ENCODE measurements at regions of chr17 and their contacts with region 1.

Region 1: DNA sequence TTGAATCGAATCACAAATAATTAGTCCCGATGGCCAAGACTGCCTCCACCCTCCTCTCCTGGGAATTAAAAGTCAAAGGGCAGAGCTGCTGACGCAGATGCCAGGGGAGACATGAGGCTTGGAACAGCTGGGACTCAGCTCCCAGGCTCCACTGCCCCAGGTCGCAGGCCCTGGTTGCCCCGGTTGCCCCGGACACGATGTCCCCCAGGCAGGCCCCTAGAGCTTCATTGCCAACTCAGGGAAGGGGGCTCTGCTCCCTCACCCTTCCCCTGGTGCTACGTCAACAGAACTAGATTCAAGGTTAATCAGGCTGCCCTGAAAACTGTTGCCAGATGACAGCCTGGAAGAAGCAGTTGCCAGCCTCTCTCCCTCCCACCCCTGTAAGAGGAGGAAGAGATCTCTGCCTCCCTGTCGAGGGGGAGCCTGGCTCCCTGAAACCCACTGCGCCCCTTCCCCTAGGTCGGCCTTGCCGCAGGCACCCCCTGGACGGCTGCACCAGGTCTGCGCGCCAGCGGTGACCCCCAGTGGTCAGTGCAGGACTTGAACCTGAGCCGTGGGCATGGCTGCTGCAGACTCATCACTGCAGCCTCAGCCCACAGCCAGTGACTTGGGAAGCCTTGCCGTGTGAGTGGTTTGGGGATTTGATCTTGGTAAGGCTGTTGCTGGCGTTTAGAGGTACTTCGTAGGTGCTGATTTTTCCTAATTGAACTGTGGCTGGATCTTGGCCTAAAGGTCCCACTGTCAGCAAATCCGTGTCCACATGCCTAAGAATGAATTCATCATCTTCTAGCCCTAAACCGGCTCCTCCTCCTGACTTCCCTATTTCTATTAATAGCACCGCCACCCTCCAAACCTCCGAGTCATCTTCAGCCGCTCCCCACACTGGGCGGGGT is 84.1 kb upstream of the TOB1 start:
- DNase-seq: peak; percentile 84
- ATAC-seq: peak; percentile 91
- H3K4me3 ChIP-seq: no peak overlapping the region
- H3K27ac ChIP-seq: peak overlapping the region; percentile 35
- H3K4me1 ChIP-seq: peaks cover 39% of the 10 kb centered on the region
- H3K27me3 ChIP-seq: no peaks in the 10 kb centered on the region
- CTCF ChIP-seq: peak; percentile 74
- POLR2A ChIP-seq: no peak
- RAD21 ChIP-seq: peak; percentile 84

Region 2: DNA sequence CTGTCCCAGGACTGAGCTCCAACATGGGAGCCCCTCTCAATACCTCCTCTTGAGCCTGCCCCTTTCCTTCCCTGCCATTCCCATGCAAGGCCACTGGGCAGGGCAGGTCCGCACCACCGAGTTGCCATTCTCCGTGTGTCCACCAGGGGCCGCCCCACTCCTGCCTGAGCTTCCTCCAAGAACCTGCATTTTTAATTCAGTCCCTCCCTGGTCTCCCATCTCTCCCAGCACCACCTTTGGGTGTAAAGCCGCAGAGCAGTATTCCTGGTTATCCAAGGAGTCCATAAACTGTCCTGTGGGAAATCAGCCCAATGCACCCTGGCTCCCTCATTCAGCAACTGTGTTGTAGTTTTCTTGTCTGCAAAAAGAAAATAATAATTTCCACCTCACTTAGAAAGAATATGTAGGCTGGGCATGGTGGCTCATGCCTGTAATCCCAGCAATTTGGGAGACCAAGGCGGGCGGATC is 167.0 kb before region 1 on chr17:
- CTCF ChIA-PET with region 1: no interaction called
- POLR2A ChIA-PET with region 1: no interaction called
- dilution Hi-C with region 1: no loop called
- in situ Hi-C with region 1: loop called (anchors 5 kb)
- intact Hi-C with region 1: loop called (anchors 1 kb)
- DNase-seq: peak; percentile 85
- ATAC-seq: peak; percentile 96
- H3K4me3 ChIP-seq: no peak overlapping the region
- H3K27ac ChIP-seq: no peak overlapping the region
- H3K4me1 ChIP-seq: peaks cover 12% of the 10 kb centered on the region
- H3K27me3 ChIP-seq: peaks cover 2% of the 10 kb centered on the region
- CTCF ChIP-seq: peak; percentile 99
- POLR2A ChIP-seq: 0 out of 2 replicates have a peak, but pooled peaks have one; percentile 36
- RAD21 ChIP-seq: peak; percentile 99

Region 3: DNA sequence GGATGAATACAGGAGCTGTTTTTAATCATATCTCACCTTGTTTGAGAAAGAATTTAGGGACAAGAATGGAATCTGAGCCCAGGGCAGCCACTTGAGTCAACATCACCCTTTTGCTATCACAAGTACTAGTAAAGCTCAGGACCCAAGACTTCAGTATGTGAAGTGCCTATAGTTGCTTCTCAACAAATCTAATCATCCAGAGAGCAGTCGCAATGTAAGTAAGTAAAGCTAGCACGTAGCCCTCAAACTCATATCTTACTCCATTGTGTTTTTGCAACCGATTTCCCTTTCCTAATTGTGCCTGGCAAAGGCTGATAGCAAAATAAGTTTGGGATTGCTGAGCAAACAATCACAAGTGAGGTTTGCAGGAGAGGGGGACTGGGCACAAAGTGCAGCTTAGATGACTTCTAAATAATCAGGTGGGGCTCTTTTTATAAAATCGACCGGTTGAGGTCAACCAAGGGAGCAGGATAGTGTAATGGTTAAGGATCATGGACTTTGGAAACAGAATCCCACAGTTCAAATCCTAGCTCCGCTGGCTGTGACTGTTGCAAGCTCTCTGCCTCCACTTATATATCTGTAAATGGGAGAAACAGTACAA is 97.1 kb before region 1 on chr17:
- CTCF ChIA-PET with region 1: interaction called, 21 read pairs
- POLR2A ChIA-PET with region 1: interaction called, 4 read pairs
- dilution Hi-C with region 1: no loop called
- in situ Hi-C with region 1: no loop called
- intact Hi-C with region 1: loop called (anchors 1 kb)
- DNase-seq: no peak
- ATAC-seq: no peak
- H3K4me3 ChIP-seq: no peak overlapping the region
- H3K27ac ChIP-seq: no peak overlapping the region
- H3K4me1 ChIP-seq: 0 out of 2 replicates have a peak, but pooled peaks cover 2% of the 10 kb centered on the region
- H3K27me3 ChIP-seq: no peaks in the 10 kb centered on the region; the same call in 1 of the 2 replicates
- CTCF ChIP-seq: no peak
- POLR2A ChIP-seq: no peak
- RAD21 ChIP-seq: no peak

Region 4: GRCh38 chr17:50931144-50931908 is 18.9 kb before region 1 on chr17:
- CTCF ChIA-PET with region 1: no interaction called
- POLR2A ChIA-PET with region 1: no interaction called
- dilution Hi-C with region 1: no loop called
- in situ Hi-C with region 1: no loop called
- intact Hi-C with region 1: loop called (anchors 1 kb)
- DNase-seq: peak; percentile 86
- ATAC-seq: peak; percentile 90
- H3K4me3 ChIP-seq: peak overlapping the region; percentile 37
- H3K27ac ChIP-seq: peak overlapping the region; percentile 65
- H3K4me1 ChIP-seq: peaks cover 7% of the 10 kb centered on the region
- H3K27me3 ChIP-seq: no peaks in the 10 kb centered on the region
- CTCF ChIP-seq: no peak
- POLR2A ChIP-seq: no peak
- RAD21 ChIP-seq: peak; percentile 23

Measured in IMR-90 (cell line).